ENCODE measurements at regions of chr1 and their contacts with region 1.

Region 1: DNA sequence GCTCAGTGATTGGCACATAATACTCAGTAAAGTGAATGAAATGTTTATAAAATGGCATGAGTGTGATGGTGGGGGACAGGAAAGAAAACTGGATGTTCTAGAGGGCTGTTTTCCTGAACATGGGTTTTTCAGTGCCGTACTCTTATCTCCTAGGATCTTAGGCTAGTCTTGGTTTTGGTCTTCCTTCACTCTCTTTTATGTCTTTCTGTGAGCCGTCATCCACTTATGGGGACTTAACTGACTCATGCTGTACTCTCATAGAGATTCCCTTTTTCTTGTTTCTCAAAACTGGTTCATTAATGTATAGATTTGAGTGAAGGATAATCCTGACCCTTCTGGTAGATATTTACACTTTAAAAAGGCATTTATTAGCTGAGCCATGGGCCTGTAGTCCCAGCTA is 16.6 kb downstream of the AGO3 start:
- DNase-seq: no peak

Region 2: GRCh38 chr1:36034692-36035091 is 87.1 kb after region 1 on chr1:
- intact Hi-C with region 1: loop called (anchors 10 kb)
- DNase-seq: no peak